Dendritic cell treated with granulocyte-macrophage colony-stimulating factor and Interleukin-4, amounts not matched to agents 40 ng/mL and 50 ng/mL, for 4 days (primary cell): ENCODE measurements at regions of chr1 and their contacts with region 1.

Region 1: DNA sequence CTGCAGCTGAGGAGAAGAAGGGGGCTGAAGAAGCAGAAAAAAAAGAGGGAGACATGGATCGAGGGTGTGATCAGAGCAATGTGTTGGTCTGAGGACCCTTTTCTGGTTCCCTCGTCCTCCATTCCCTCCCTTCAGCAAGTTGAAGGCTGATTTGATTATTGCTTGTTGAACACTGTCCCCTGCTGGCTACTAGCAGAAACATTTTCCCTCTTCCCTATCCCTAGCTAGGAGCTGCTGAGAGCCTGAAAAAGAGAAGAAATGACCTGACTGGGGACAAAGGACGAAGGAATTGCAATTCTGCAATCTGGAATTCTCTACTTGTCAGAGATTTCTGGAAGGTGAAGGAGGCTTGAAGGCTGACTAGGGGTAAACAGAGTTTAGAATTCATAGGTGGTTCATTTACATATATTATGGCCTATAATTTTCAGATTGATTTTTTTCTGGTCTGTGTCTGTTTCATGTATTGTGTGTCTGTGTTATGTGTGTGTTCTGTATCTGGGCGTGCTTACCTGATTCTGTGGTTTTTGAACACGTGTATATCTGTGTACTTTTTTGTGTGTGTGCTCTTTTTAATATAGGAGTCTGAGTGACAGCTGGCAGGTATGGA is 9.8 kb downstream of the NHLH1 start:
- H3K4me3 Mint-ChIP-seq: no peak overlapping the region
- H3K27ac Mint-ChIP-seq: peak overlapping the region; percentile 83
- H3K4me1 Mint-ChIP-seq: peaks cover 66% of the 10 kb centered on the region
- H3K27me3 Mint-ChIP-seq: peaks cover 1% of the 10 kb centered on the region

Region 2: GRCh38 chr1:160193091-160193819 is 183.4 kb before region 1 on chr1:
- intact Hi-C with region 1: loop called (anchors 1 kb)
- H3K4me3 Mint-ChIP-seq: no peak overlapping the region
- H3K27ac Mint-ChIP-seq: no peak overlapping the region
- H3K4me1 Mint-ChIP-seq: peaks cover 5% of the 10 kb centered on the region
- H3K27me3 Mint-ChIP-seq: peaks cover 1% of the 10 kb centered on the region

Region 3: GRCh38 chr1:160291248-160292220 is 85.1 kb before region 1 on chr1:
- intact Hi-C with region 1: loop called (anchors 5 kb)
- H3K4me3 Mint-ChIP-seq: no peak overlapping the region
- H3K27ac Mint-ChIP-seq: peak overlapping the region; percentile 11
- H3K4me1 Mint-ChIP-seq: peaks cover 21% of the 10 kb centered on the region
- H3K27me3 Mint-ChIP-seq: no peaks in the 10 kb centered on the region

Region 4: DNA sequence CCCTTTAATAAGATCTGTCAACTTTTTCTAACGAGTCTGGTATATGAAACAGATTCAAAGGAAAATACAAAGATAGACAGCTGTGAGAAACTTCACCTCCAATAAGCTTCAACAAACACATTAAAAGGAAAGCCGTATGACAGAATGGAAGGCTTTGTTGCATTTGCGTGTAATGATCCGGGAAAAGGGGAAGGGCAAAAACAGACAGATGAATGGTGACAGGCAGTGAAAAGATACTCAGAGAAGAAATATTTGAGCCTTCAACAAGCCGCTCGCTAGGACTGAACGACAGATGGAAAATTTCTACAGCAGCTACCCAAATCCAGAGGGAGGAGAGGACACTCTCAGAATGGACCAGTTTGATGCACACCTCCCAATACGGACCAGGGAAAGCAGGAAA is 48.4 kb before region 1 on chr1:
- intact Hi-C with region 1: loop called (anchors 10 kb)
- H3K4me3 Mint-ChIP-seq: no peak overlapping the region
- H3K27ac Mint-ChIP-seq: peak overlapping the region; percentile 46
- H3K4me1 Mint-ChIP-seq: peaks cover 29% of the 10 kb centered on the region
- H3K27me3 Mint-ChIP-seq: no peaks in the 10 kb centered on the region

Region 5: GRCh38 chr1:160346958-160347357 is 29.7 kb before region 1 on chr1:
- intact Hi-C with region 1: loop called (anchors 2 kb)
- H3K4me3 Mint-ChIP-seq: peak overlapping the region; percentile 32
- H3K27ac Mint-ChIP-seq: peak overlapping the region; percentile 94
- H3K4me1 Mint-ChIP-seq: peaks cover 45% of the 10 kb centered on the region
- H3K27me3 Mint-ChIP-seq: no peaks in the 10 kb centered on the region

Region 6: DNA sequence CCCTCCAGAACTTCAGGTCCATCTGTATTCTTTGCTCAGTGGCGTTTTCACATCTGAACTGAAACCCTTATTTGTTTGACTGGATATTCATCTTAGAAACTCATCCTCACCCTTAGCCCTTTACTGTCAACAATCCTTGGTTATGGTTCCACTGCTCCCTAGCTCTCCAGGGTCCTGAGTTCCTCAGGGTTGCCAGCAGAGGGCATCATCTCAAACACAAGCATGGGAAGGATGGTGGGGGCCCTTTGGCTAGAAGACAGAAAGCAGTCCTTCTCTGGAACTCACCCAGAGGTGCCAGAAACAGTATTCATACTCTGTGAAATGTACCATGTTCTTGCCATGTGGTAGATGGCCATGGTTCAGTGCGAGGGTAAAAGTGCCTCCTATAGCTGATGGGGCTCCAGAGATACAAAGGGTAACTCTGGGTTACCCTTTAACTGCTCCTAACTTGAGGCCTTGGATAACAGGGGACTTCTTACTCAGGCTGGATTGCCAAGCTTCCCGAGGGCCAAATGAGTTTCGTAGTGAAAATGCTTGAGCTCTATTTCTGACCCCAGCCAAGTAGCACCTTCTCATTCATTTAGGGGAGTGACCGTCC is 22.1 kb before region 1 on chr1:
- intact Hi-C with region 1: loop called (anchors 2 kb)
- H3K4me3 Mint-ChIP-seq: no peak overlapping the region
- H3K27ac Mint-ChIP-seq: no peak overlapping the region
- H3K4me1 Mint-ChIP-seq: peaks cover 24% of the 10 kb centered on the region
- H3K27me3 Mint-ChIP-seq: no peaks in the 10 kb centered on the region

Region 7: GRCh38 chr1:160428655-160429054 is 52.0 kb after region 1 on chr1:
- intact Hi-C with region 1: no loop called
- H3K4me3 Mint-ChIP-seq: no peak overlapping the region
- H3K27ac Mint-ChIP-seq: peak overlapping the region; percentile 63
- H3K4me1 Mint-ChIP-seq: peaks cover 37% of the 10 kb centered on the region
- H3K27me3 Mint-ChIP-seq: no peaks in the 10 kb centered on the region